Activated CD4-positive, alpha-beta T cell treated with anti-CD3 and anti-CD28 coated beads for 36 hours (primary cell): ENCODE measurements at regions of chr7 and their contacts with region 1.

Region 1: GRCh38 chr7:82179311-82179710 is 264.3 kb downstream of the CACNA2D1 start:
- DNase-seq: no peak
- ATAC-seq: no peak
- H3K4me3 Mint-ChIP-seq: no peak overlapping the region
- H3K27ac Mint-ChIP-seq: no peak overlapping the region
- H3K4me1 Mint-ChIP-seq: no peaks in the 10 kb centered on the region
- H3K27me3 Mint-ChIP-seq: no peaks in the 10 kb centered on the region

Region 2: GRCh38 chr7:82141427-82141826 is 37.9 kb before region 1 on chr7:
- CTCF ChIA-PET with region 1: no interaction called
- POLR2A ChIA-PET with region 1: no interaction called
- intact Hi-C with region 1: loop called in 1 of 2 experiments (anchors 2 kb)
- DNase-seq: no peak
- ATAC-seq: no peak
- H3K4me3 Mint-ChIP-seq: no peak overlapping the region
- H3K27ac Mint-ChIP-seq: no peak overlapping the region
- H3K4me1 Mint-ChIP-seq: no peaks in the 10 kb centered on the region
- H3K27me3 Mint-ChIP-seq: no peaks in the 10 kb centered on the region

Region 3: DNA sequence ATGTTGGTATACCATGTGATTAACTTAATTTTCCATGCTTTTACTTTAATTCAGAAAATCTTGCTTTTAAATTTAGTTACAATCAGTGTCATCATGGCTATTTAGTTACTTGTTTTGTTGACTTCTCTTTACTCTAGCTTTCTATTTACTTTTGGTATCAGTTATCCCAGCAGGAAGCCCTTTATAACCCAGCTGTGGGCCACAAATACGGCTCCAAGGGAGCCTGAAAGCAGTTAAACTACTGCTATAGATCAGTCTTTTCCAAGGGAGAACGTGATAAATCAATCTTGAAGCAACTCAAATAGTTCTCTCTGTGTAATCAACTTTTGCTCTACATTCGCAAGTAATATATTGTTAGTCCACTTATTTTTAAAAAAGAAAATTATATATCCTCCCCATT is 23.1 kb before region 1 on chr7:
- CTCF ChIA-PET with region 1: no interaction called
- POLR2A ChIA-PET with region 1: no interaction called
- intact Hi-C with region 1: no loop called
- DNase-seq: no peak
- ATAC-seq: no peak
- H3K4me3 Mint-ChIP-seq: no peak overlapping the region
- H3K27ac Mint-ChIP-seq: no peak overlapping the region
- H3K4me1 Mint-ChIP-seq: no peaks in the 10 kb centered on the region
- H3K27me3 Mint-ChIP-seq: no peaks in the 10 kb centered on the region